GM12878 (cell line): ENCODE measurements at regions of chr16 and their contacts with region 1.

Region 1: DNA sequence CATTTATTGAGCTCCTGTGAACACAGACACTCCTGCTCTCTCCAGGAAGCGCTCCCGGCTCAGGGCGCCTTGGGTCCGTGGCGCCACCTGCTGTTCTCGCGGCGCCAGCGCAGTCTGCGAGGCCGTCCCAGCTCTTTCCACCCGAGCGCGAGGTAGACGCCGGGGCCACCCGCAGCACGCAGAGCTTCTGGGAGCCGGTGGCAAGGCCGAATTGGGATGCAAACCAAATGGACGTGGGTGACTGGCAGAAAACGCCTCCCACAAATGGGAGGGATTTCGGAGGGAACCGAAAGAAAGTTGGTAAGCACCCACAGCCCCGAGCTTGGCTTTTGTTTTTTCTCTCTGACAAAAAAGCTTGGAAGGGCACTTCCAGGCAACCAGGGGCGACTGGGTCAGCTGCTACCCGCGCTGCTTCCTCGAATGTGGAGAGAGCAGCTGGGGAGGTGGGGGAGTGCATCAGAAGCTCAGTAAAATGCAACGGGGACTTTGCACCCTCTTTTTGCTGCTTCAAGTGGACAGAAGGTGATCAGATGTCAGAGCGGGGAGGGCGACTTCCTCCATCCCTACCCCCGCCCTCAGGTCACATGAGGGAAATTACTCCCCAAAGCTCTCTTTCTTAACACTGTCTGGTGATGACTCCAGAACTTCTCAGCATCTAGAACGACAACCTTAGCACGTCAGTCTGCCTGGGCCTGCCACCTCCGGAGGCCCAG is 13.5 kb upstream of the N4BP1 start:
- DNase-seq: peak; percentile 53
- ATAC-seq: peak; percentile 99
- H3K4me3 ChIP-seq: peak overlapping the region; percentile 64
- H3K27ac ChIP-seq: no peak overlapping the region
- H3K4me1 ChIP-seq: peaks cover 11% of the 10 kb centered on the region
- H3K27me3 ChIP-seq: no peaks in the 10 kb centered on the region; a peak in 1 of 4 replicates
- CTCF ChIP-seq: peak; percentile 96 to 99 (median 98)
- EP300 ChIP-seq: no peak
- POLR2A ChIP-seq: no peak
- RAD21 ChIP-seq: peak; percentile 98

Region 2: GRCh38 chr16:48231727-48232492 is 391.6 kb before region 1 on chr16:
- CTCF ChIA-PET with region 1: interaction called, 18 read pairs
- POLR2A ChIA-PET with region 1: interaction called, 3 read pairs
- RAD21 ChIA-PET with region 1: interaction called, 30 read pairs
- SMC1A ChIA-PET with region 1: interaction called, 30 read pairs
- in situ Hi-C with region 1: no loop called
- intact Hi-C with region 1: loop called (anchors 5 kb)
- DNase-seq: no peak
- ATAC-seq: peak; percentile 93
- H3K4me3 ChIP-seq: no peak overlapping the region
- H3K27ac ChIP-seq: no peak overlapping the region
- H3K4me1 ChIP-seq: peaks cover 3% of the 10 kb centered on the region
- H3K27me3 ChIP-seq: no peaks in the 10 kb centered on the region
- CTCF ChIP-seq: peak; percentile 61 to 62 (median 62); a peak in 5 of 6 replicates
- EP300 ChIP-seq: no peak
- POLR2A ChIP-seq: no peak
- RAD21 ChIP-seq: peak; percentile 75

Region 3: DNA sequence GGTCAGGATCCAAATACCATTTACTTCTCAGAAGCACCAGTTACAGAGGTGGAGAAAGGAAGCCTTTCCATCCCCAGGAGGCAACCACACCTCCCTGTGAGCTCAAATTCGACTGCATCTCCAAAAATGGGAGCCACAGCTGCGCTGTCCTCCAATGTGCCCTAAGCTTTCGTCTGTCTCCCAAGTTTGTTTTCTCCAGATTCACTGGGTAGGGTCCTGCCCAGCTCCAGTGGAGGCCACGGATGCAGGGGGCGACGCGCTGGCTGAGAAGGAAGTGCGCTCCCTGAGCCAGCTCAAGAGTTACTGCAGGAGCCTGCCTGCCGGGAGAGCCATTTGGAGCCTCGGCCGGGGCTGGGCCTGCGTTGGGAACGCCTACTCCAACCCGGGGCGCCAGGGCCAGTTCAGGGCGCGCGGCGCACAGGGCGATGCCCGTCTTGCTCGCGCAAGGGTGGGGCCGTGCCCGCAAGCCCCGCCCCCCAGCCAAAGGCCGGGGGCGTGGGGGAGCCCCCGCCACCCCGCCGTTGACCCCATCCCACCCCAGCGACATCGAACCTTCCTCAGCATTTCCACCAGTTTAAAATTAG is 257.8 kb before region 1 on chr16:
- CTCF ChIA-PET with region 1: interaction called, 17 read pairs
- POLR2A ChIA-PET with region 1: no interaction called
- RAD21 ChIA-PET with region 1: interaction called, 15 read pairs
- SMC1A ChIA-PET with region 1: interaction called, 11 read pairs
- in situ Hi-C with region 1: no loop called
- intact Hi-C with region 1: no loop called
- DNase-seq: no peak
- ATAC-seq: peak; percentile 97
- H3K4me3 ChIP-seq: peak overlapping the region; percentile 64
- H3K27ac ChIP-seq: peak overlapping the region; percentile 90
- H3K4me1 ChIP-seq: peaks cover 14% of the 10 kb centered on the region
- H3K27me3 ChIP-seq: no peaks in the 10 kb centered on the region
- CTCF ChIP-seq: no peak
- EP300 ChIP-seq: no peak
- POLR2A ChIP-seq: peak; percentile 73
- RAD21 ChIP-seq: no peak

Region 4: GRCh38 chr16:48526058-48526957 is 97.2 kb before region 1 on chr16:
- CTCF ChIA-PET with region 1: interaction called, 70 read pairs
- POLR2A ChIA-PET with region 1: interaction called, 3 read pairs
- RAD21 ChIA-PET with region 1: interaction called, 31 read pairs
- SMC1A ChIA-PET with region 1: interaction called, 16 read pairs
- in situ Hi-C with region 1: no loop called
- intact Hi-C with region 1: no loop called
- DNase-seq: peak; percentile 40
- ATAC-seq: peak; percentile 94
- H3K4me3 ChIP-seq: no peak overlapping the region
- H3K27ac ChIP-seq: no peak overlapping the region
- H3K4me1 ChIP-seq: 0 out of 2 replicates have a peak, but pooled peaks cover 5% of the 10 kb centered on the region
- H3K27me3 ChIP-seq: no peaks in the 10 kb centered on the region
- CTCF ChIP-seq: peak; percentile 53 to 75 (median 54); a peak in 4 of 6 replicates
- EP300 ChIP-seq: no peak
- POLR2A ChIP-seq: no peak
- RAD21 ChIP-seq: peak; percentile 90

Region 5: DNA sequence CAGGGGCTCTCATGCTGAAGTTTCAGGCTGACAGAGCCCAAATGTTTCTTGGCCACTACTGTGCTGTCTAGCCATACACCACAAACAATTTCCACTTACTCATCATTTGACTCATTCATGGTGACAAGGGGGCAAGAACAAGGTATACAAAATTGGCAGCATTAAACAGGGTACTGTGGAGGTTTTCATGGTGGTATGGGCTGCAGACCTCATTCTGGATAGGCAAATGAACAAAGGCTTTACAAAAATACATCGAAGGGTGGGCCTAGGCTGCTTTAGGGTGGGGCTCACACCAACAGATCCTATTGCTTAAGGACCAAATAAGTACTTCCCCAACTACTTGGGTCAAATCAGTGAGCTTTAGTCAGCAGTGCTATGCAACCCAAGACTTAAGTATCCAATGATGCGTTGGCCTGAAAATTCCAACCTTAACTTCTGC is 66.5 kb before region 1 on chr16:
- CTCF ChIA-PET with region 1: interaction called, 13 read pairs
- POLR2A ChIA-PET with region 1: no interaction called
- RAD21 ChIA-PET with region 1: interaction called, 9 read pairs
- SMC1A ChIA-PET with region 1: interaction called, 3 read pairs
- in situ Hi-C with region 1: no loop called
- intact Hi-C with region 1: no loop called
- DNase-seq: peak; percentile 40
- ATAC-seq: peak; percentile 92
- H3K4me3 ChIP-seq: no peak overlapping the region
- H3K27ac ChIP-seq: no peak overlapping the region
- H3K4me1 ChIP-seq: peaks cover 4% of the 10 kb centered on the region
- H3K27me3 ChIP-seq: no peaks in the 10 kb centered on the region
- CTCF ChIP-seq: no peak
- EP300 ChIP-seq: no peak
- POLR2A ChIP-seq: no peak
- RAD21 ChIP-seq: no peak

Region 6: GRCh38 chr16:48603647-48604376 is 19.6 kb before region 1 on chr16:
- CTCF ChIA-PET with region 1: interaction called, 17 read pairs
- POLR2A ChIA-PET with region 1: interaction called, 4 read pairs
- RAD21 ChIA-PET with region 1: interaction called, 9 read pairs
- SMC1A ChIA-PET with region 1: interaction called, 8 read pairs
- in situ Hi-C with region 1: no loop called
- intact Hi-C with region 1: no loop called
- DNase-seq: no peak
- ATAC-seq: no peak
- H3K4me3 ChIP-seq: peak overlapping the region; percentile 13; the same call in 1 of the 2 replicates
- H3K27ac ChIP-seq: no peak overlapping the region
- H3K4me1 ChIP-seq: peaks cover 22% of the 10 kb centered on the region
- H3K27me3 ChIP-seq: no peaks in the 10 kb centered on the region
- CTCF ChIP-seq: no peak
- EP300 ChIP-seq: no peak
- POLR2A ChIP-seq: no peak
- RAD21 ChIP-seq: no peak